Sciatic nerve (tissue), 2 donors: ENCODE measurements at regions of chr16 and their contacts with region 1.

Region 1: DNA sequence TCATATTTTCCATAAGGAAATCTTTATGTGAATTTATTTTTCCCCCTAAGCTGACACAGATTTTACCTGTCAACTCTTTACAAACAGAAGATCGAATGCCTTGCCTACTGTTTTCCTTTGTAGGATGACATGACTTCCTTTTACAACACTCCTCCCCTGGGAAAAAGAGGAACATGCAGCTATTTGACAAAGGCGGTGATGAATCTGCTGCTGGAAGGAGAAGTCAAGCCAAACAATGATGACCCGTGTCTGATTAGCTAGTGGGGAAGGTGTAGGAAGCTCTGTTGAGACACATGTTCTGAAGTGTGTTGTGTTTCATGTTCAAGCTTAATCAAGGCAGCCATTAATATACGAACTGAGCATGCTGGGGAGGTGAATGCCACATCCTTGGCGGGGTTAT is 238.0 kb downstream of the PHKB start:
- DNase-seq: no peak
- ATAC-seq: no peak

Region 2: GRCh38 chr16:47687694-47688093 is 11.4 kb before region 1 on chr16:
- intact Hi-C with region 1: loop called (anchors 1 kb)
- DNase-seq: no peak
- ATAC-seq: no peak

Region 3: GRCh38 chr16:47806309-47806847 is 107.3 kb after region 1 on chr16:
- intact Hi-C with region 1: no loop called
- DNase-seq: no peak
- ATAC-seq: no peak